ENCODE measurements at regions of chr11 and their contacts with region 1.

Region 1: GRCh38 chr11:100981196-100981824 is 148.3 kb downstream of the PGR start:
- DNase-seq: no peak
- H3K4me3 ChIP-seq: no peak overlapping the region
- H3K27ac ChIP-seq: no peak overlapping the region
- H3K4me1 ChIP-seq: no peaks in the 10 kb centered on the region; a peak in 1 of 7 replicates
- H3K27me3 ChIP-seq: peaks cover 13 to 31% (median 16%) of the 10 kb centered on the region in 4 experiments; a peak in 5 of 7 replicates
- CTCF ChIP-seq: no peak
- EP300 ChIP-seq: no peak
- POLR2A ChIP-seq: no peak
- RAD21 ChIP-seq: no peak

Region 2: GRCh38 chr11:100994966-100995365 is 13.7 kb after region 1 on chr11:
- CTCF ChIA-PET with region 1: interaction called, 13 read pairs
- POLR2A ChIA-PET with region 1: no interaction called
- DNase-seq: no peak
- H3K4me3 ChIP-seq: no peak overlapping the region
- H3K27ac ChIP-seq: no peak overlapping the region
- H3K4me1 ChIP-seq: no peaks in the 10 kb centered on the region
- H3K27me3 ChIP-seq: no peaks in the 10 kb centered on the region
- CTCF ChIP-seq: no peak
- EP300 ChIP-seq: no peak
- POLR2A ChIP-seq: no peak
- RAD21 ChIP-seq: no peak

Region 3: DNA sequence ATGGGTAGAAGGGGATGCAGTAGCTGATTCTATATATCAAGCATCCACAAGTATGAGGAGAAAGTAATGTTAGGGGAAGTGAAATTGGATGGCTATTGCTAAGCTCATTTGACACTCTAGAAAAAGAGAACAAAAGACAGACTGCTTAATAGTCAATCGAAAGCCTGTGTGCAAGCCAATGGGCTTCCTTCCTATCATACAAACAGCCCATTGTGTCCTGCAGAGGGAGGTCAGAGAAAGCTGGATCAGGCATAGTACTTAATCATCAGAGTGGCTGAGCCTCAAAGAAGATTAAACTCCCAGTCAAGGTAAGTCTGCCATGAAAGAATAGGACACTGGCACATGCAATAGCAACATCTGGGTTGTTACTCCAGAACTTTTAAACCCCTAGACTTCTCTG is 199.2 kb after region 1 on chr11:
- CTCF ChIA-PET with region 1: no interaction called
- POLR2A ChIA-PET with region 1: no interaction called
- DNase-seq: no peak
- H3K4me3 ChIP-seq: no peak overlapping the region
- H3K27ac ChIP-seq: no peak overlapping the region
- H3K4me1 ChIP-seq: no peaks in the 10 kb centered on the region
- H3K27me3 ChIP-seq: no peaks in the 10 kb centered on the region
- CTCF ChIP-seq: no peak
- EP300 ChIP-seq: no peak
- POLR2A ChIP-seq: no peak
- RAD21 ChIP-seq: no peak

Measured in H1 (cell line).